ENCODE measurements at regions of chr13 and their contacts with region 1.

Region 1: GRCh38 chr13:110220471-110220870 is 86.5 kb downstream of the COL4A1 start:
- DNase-seq: no peak
- ATAC-seq: no peak
- H3K4me3 Mint-ChIP-seq: no peak overlapping the region
- H3K27ac Mint-ChIP-seq: no peak overlapping the region
- H3K4me1 Mint-ChIP-seq: no peaks in the 10 kb centered on the region
- H3K27me3 Mint-ChIP-seq: peaks cover 5% of the 10 kb centered on the region

Region 2: DNA sequence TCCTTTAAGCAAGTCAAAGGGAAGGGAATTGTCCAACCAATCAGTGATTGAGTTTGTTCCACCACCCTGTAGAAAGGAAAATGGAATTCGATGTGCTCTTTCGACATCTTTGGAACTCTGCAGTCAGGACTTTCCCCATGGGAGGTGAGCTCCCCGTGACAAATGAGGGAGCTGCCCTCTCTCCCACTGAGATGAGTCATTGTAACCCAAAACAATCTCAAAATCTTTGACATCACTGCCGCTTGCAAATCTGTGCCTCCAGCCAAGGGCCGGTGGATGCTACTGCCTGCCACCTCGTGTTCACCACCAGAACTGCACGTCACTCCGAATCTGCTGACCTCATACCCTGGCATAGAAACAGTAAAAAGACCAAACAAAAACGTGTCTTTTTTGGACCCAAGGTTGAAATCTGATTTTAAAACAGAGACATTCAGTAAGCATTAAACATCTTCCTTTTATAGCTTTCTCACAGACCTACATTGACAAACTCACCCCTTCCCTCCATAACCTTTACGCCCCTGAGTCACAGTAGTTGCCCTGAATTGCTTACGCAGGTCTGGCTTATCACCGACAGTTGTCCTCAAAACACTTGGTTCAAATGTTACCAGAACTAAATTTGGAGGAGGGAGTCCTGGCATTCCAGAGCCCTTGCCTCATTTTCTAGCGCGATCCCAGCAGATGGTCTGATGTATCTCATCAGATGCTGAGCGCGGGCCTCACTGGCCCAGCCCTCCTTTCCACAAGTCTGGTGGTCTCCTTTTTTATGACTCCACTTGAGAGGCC is 191.9 kb after region 1 on chr13:
- CTCF ChIA-PET with region 1: interaction called, 32 read pairs
- POLR2A ChIA-PET with region 1: no interaction called
- DNase-seq: peak; percentile 73
- ATAC-seq: peak; percentile 83
- H3K4me3 Mint-ChIP-seq: no peak overlapping the region
- H3K27ac Mint-ChIP-seq: no peak overlapping the region
- H3K4me1 Mint-ChIP-seq: peaks cover 4% of the 10 kb centered on the region
- H3K27me3 Mint-ChIP-seq: peaks cover 58% of the 10 kb centered on the region